ENCODE measurements at regions of chr4 and their contacts with region 1.

Region 1: DNA sequence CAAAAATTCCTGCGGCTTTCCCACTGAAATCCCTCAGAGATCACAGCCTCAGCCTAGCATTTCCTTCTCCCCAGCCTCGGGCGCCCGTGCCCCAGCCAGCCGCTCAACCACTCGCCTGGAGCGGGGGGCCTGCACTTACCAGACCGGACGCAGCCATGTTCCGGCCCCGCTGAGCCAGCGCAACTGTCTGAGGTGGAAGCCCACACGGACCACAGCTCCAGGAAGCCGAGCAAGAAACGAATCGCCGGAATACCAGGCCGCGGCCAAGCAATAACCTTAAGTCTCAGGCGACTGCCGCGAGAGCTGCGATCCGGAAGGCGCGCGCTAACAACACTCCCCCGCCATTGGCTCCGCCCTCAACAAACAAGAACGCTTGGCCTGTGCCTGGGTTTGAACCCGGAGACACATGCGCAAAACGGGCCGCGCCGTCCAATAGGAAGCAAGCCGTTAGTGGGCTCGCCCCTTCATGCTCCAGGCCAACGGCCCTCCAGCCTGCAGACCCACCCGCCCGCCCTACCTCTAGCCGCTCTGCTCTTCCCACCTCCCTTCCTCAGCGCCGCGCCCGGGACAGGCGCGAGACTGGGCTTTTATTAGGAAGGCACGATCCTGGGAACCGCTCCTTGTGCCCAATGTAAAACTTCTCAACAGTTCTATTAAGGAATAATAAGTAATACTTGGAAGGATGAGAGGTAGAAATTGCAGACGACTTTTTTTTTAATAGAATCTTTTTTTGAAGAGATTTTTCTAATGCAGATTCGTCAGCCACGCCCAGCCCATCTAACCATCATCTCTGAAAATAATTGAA is at the start of gene CENPC:
- DNase-seq: peak; percentile 94
- H3K4me3 ChIP-seq: peak within 1 kb of the TSS; percentile 66
- H3K27ac ChIP-seq: peak within 1 kb of the TSS; percentile 95
- H3K4me1 ChIP-seq: no peaks in the 10 kb centered on the region
- H3K27me3 ChIP-seq: no peaks in the 10 kb centered on the region
- CTCF ChIP-seq: no peak
- total RNA-seq, gene CENPC: 11.8 and 12.0 TPM in 2 replicates

Region 2: GRCh38 chr4:67632492-67632891 is 87.1 kb after region 1 on chr4:
- CTCF ChIA-PET with region 1: no interaction called
- POLR2A ChIA-PET with region 1: no interaction called
- intact Hi-C with region 1: no loop called
- DNase-seq: no peak
- H3K4me3 ChIP-seq: no peak overlapping the region
- H3K27ac ChIP-seq: no peak overlapping the region
- H3K4me1 ChIP-seq: no peaks in the 10 kb centered on the region
- H3K27me3 ChIP-seq: no peaks in the 10 kb centered on the region
- CTCF ChIP-seq: no peak

Region 3: DNA sequence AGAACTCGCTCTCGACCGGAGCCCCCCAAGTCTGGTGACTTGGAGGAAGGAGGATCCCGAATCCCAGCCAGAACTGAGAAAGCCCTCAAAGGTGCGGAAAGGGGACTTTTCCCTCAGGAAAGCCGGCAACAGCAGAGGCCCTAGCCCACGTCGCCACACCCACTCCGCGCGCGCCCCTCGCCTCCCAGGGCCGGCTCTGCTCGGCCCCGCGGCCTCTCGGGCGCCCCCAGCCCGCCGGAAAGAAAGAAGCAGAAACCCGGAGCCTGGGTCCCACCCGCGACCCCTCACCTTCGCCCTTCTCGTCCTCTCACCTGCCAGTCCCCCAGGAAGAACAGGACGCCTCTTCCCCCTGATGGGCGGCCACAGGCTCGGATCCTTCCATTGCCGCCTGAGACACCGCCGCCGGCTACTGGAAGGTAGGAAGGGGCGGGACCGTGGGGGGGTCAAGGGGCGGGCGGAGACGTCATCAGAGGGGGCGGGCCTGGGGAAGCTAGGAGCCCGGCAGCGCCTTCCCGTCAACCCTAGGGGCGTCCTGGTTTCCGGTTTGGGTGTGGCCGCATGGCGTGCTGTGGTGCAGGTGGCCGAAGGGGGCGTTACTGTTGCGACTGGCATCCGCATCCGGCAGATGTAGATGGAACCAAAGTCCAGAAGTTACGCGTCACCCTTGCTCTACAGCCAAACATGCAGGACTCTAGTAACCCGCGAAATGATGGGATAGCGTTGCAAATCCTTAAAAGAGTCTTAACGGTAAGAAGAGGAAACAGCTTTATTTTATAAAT is 155.5 kb after region 1 on chr4 and contains the start of gene UBA6:
- CTCF ChIA-PET with region 1: no interaction called
- POLR2A ChIA-PET with region 1: no interaction called
- intact Hi-C with region 1: loop called (anchors 10 kb)
- DNase-seq: peak; percentile 92
- H3K4me3 ChIP-seq: peak within 1 kb of the TSS; percentile 67
- H3K27ac ChIP-seq: peak within 1 kb of the TSS; percentile 76
- H3K4me1 ChIP-seq: no peaks in the 10 kb centered on the region
- H3K27me3 ChIP-seq: no peaks in the 10 kb centered on the region
- CTCF ChIP-seq: peak; percentile 31
- total RNA-seq, gene UBA6: 33.2 and 36.3 TPM in 2 replicates

Region 4: GRCh38 chr4:67796810-67797209 is 251.4 kb after region 1 on chr4:
- CTCF ChIA-PET with region 1: no interaction called
- POLR2A ChIA-PET with region 1: no interaction called
- intact Hi-C with region 1: no loop called
- DNase-seq: no peak
- H3K4me3 ChIP-seq: no peak overlapping the region
- H3K27ac ChIP-seq: no peak overlapping the region
- H3K4me1 ChIP-seq: no peaks in the 10 kb centered on the region
- H3K27me3 ChIP-seq: no peaks in the 10 kb centered on the region
- CTCF ChIP-seq: no peak

Measured in A673 (cell line).